ENCODE measurements at regions of chr10 and their contacts with region 1.

Region 1: GRCh38 chr10:69281507-69282413 is 3.5 kb downstream of the HK1 start:
- DNase-seq: no peak
- ATAC-seq: peak; percentile 61

Region 2: GRCh38 chr10:69261184-69261583 is 20.6 kb before region 1 on chr10:
- intact Hi-C with region 1: loop called (anchors 1 kb)
- DNase-seq: no peak
- ATAC-seq: no peak

Measured in Right ventricle myocardium inferior (tissue), 1 donor.